ENCODE measurements at regions of chr13 and their contacts with region 1.

Region 1: GRCh38 chr13:45119991-45120864 is at the start of gene GTF2F2:
- DNase-seq: peak; percentile 94
- ATAC-seq: peak; percentile 81
- H3K4me3 ChIP-seq: peak within 1 kb of the TSS; percentile 68 to 100 (median 92)
- H3K4me3 Mint-ChIP-seq: no peak within 1 kb of the TSS
- H3K27ac ChIP-seq: peak within 1 kb of the TSS; percentile 66 to 93
- H3K27ac Mint-ChIP-seq: no peak within 1 kb of the TSS
- H3K4me1 ChIP-seq: peaks cover 20 to 21% of the 10 kb centered on the region in 2 donors
- H3K4me1 Mint-ChIP-seq: peaks cover 7% of the 10 kb centered on the region
- H3K27me3 ChIP-seq: no peaks in the 10 kb centered on the region
- H3K27me3 Mint-ChIP-seq: no peaks in the 10 kb centered on the region
- CTCF ChIP-seq: no peak
- total RNA-seq, gene GTF2F2: 19.6 and 23.6 TPM in 2 replicates

Region 2: GRCh38 chr13:43516401-43516833 is 1603.8 kb before region 1 on chr13:
- CTCF ChIA-PET with region 1: no interaction called
- POLR2A ChIA-PET with region 1: no interaction called
- intact Hi-C with region 1: no loop called
- DNase-seq: no peak
- ATAC-seq: no peak
- H3K4me3 ChIP-seq: no peak overlapping the region
- H3K4me3 Mint-ChIP-seq: no peak overlapping the region
- H3K27ac ChIP-seq: no peak overlapping the region
- H3K27ac Mint-ChIP-seq: no peak overlapping the region
- H3K4me1 ChIP-seq: no peaks in the 10 kb centered on the region
- H3K4me1 Mint-ChIP-seq: no peaks in the 10 kb centered on the region
- H3K27me3 ChIP-seq: no peaks in the 10 kb centered on the region
- H3K27me3 Mint-ChIP-seq: peaks cover 4% of the 10 kb centered on the region
- CTCF ChIP-seq: no peak

Region 3: GRCh38 chr13:44810061-44810840 is 310.0 kb before region 1 on chr13:
- CTCF ChIA-PET with region 1: no interaction called
- POLR2A ChIA-PET with region 1: no interaction called
- intact Hi-C with region 1: no loop called
- DNase-seq: no peak
- ATAC-seq: no peak
- H3K4me3 ChIP-seq: no peak overlapping the region
- H3K4me3 Mint-ChIP-seq: no peak overlapping the region
- H3K27ac ChIP-seq: no peak overlapping the region
- H3K27ac Mint-ChIP-seq: no peak overlapping the region
- H3K4me1 ChIP-seq: no peaks in the 10 kb centered on the region
- H3K4me1 Mint-ChIP-seq: no peaks in the 10 kb centered on the region
- H3K27me3 ChIP-seq: no peaks in the 10 kb centered on the region
- H3K27me3 Mint-ChIP-seq: peaks cover 1% of the 10 kb centered on the region
- CTCF ChIP-seq: no peak

Region 4: DNA sequence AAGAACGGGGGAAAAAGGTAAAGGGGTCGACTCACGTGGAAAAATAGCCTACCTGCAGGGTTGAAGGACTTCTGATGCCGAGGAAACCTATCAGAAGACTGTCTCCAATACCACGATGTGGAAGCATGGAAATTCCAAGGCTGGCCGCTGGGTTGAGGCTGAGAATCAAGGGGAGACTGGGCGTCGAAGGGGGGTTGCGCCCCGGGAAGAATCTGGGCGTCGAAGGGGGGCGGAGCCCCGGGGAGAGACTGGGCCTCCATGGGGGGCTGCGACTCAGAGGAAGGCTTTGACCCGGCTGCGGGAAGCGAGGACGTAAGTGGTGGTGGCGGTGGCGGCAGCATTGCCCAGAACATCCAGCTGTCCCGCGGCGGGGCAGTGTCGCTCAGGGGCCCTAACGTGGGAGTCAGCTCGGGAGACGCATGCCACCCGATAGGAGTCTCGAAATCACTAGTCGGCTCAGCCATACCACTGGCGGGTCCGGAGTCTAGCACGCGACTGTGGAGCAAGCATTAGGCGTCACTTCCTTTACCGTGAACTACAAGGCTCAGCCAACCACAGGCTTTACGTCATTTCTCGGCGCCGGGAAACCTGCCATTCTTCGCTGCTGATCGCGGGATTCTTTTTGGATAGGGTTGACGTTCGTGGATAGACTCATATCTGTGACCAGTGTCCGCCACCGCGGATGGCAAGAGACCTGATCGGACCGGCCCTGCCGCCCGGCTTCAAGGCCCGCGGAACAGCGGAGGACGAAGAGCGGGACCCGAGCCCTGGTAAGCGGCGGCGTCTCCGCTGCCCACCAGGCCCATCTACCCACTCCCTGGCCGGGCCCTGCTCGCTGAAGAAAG is 131.0 kb before region 1 on chr13 and contains the starts of genes GPALPP1 and NUFIP1:
- CTCF ChIA-PET with region 1: no interaction called
- POLR2A ChIA-PET with region 1: no interaction called
- intact Hi-C with region 1: loop called (anchors 1 kb)
- DNase-seq: peak; percentile 93
- ATAC-seq: peak; percentile 97
- H3K4me3 ChIP-seq: peak within 1 kb of the TSS; percentile 92 to 99 (median 98)
- H3K4me3 Mint-ChIP-seq: peak within 1 kb of the TSS; percentile 100
- H3K27ac ChIP-seq: peak within 1 kb of the TSS; percentile 79 to 89
- H3K27ac Mint-ChIP-seq: peak within 1 kb of the TSS; percentile 98
- H3K4me1 ChIP-seq: peaks cover 13 to 24% of the 10 kb centered on the region in 2 donors
- H3K4me1 Mint-ChIP-seq: peaks cover 43% of the 10 kb centered on the region
- H3K27me3 ChIP-seq: no peaks in the 10 kb centered on the region
- H3K27me3 Mint-ChIP-seq: no peaks in the 10 kb centered on the region
- CTCF ChIP-seq: no peak
- total RNA-seq, gene GPALPP1: 41.8 and 45.6 TPM in 2 replicates
- total RNA-seq, gene NUFIP1: 4.7 and 5.8 TPM in 2 replicates

Region 5: DNA sequence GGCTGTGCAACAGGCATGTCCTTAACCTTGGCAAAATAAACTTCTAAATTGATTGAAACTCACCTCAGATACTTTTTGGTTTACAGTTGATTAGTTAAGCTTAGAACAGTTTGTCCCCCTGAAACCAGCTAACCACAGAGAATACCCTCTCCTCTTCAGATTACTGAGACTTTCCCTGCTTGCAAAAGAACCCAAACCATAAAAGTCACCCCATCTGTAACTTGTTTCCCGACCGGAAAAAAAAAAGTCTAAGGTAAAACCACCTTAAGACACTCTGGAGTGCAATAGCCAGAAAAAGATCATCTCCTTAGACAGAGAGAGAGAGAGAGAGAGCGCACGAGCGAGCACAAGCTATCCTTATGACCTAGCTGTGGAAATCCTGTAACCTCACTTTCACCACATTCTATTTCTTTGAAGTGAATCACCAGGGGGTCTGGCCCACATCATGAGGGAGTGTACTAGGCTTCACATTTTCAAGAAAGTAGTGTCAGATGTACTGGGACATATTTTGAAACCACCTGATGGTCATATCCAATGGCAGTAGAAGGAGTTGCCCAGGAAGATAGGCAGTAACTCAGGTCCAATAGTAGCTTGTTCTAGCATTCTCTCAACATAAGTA is 11.0 kb before region 1 on chr13:
- CTCF ChIA-PET with region 1: no interaction called
- POLR2A ChIA-PET with region 1: no interaction called
- intact Hi-C with region 1: no loop called
- DNase-seq: no peak
- ATAC-seq: no peak
- H3K4me3 ChIP-seq: peak overlapping the region in 2 of 5 experiments; percentile 10 to 16
- H3K4me3 Mint-ChIP-seq: peak overlapping the region; percentile 49
- H3K27ac ChIP-seq: no peak overlapping the region
- H3K27ac Mint-ChIP-seq: no peak overlapping the region
- H3K4me1 ChIP-seq: no peaks in the 10 kb centered on the region
- H3K4me1 Mint-ChIP-seq: peaks cover 4% of the 10 kb centered on the region
- H3K27me3 ChIP-seq: peaks cover 0 to 2% (median 0%) of the 10 kb centered on the region in 4 experiments
- H3K27me3 Mint-ChIP-seq: peaks cover 25% of the 10 kb centered on the region
- CTCF ChIP-seq: no peak

Region 6: GRCh38 chr13:45301243-45301642 is 181.0 kb after region 1 on chr13:
- CTCF ChIA-PET with region 1: no interaction called
- POLR2A ChIA-PET with region 1: no interaction called
- intact Hi-C with region 1: loop called (anchors 10 kb)
- DNase-seq: no peak
- ATAC-seq: no peak
- H3K4me3 ChIP-seq: no peak overlapping the region
- H3K4me3 Mint-ChIP-seq: no peak overlapping the region
- H3K27ac ChIP-seq: no peak overlapping the region
- H3K27ac Mint-ChIP-seq: no peak overlapping the region
- H3K4me1 ChIP-seq: peaks cover 0 to 7% of the 10 kb centered on the region in 2 donors
- H3K4me1 Mint-ChIP-seq: peaks cover 7% of the 10 kb centered on the region
- H3K27me3 ChIP-seq: no peaks in the 10 kb centered on the region
- H3K27me3 Mint-ChIP-seq: peaks cover 10% of the 10 kb centered on the region
- CTCF ChIP-seq: no peak

Region 7: DNA sequence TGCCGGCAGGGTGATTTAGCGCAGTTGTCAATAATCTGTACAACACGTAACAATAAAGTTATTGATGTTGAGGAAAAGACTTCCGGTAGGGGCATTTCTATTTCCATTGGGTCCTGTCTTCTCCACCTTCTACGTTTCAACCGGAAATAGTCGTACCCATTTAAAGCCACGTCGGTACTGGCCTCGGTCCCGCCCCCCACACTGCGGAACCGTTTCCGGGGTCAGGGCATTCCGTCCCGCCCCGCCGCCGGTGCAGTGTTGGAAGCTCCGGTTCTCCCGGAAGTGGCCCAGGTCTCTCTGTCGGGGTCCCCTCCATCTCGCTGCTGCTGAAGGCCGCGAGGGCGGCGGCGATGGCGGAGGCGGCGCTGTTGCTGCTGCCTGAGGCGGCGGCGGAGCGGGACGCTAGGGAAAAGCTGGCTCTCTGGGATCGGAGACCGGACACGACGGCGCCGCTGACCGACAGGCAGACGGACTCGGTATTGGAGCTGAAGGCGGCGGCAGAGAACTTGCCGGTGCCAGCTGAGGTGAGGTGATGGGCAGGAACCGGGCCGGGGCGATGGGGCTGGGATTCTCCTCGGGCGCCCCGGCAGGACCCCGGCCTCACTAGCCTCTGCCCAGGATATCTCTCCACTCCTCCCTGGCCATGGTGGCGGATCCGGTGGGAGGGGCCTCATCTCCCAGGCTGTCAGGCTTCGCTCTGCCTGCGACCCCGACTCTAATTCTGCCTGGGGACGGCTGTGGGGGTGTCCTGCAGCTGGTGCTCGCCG is 344.6 kb after region 1 on chr13 and contains the start of gene COG3:
- CTCF ChIA-PET with region 1: no interaction called
- POLR2A ChIA-PET with region 1: no interaction called
- intact Hi-C with region 1: loop called (anchors 1 kb)
- DNase-seq: peak; percentile 96
- ATAC-seq: peak; percentile 96
- H3K4me3 ChIP-seq: peak within 1 kb of the TSS; percentile 74 to 96 (median 88)
- H3K4me3 Mint-ChIP-seq: peak within 1 kb of the TSS; percentile 91
- H3K27ac ChIP-seq: peak within 1 kb of the TSS; percentile 78 to 83
- H3K27ac Mint-ChIP-seq: peak within 1 kb of the TSS; percentile 91
- H3K4me1 ChIP-seq: peaks cover 12 to 21% of the 10 kb centered on the region in 2 donors
- H3K4me1 Mint-ChIP-seq: peaks cover 38% of the 10 kb centered on the region
- H3K27me3 ChIP-seq: no peaks in the 10 kb centered on the region
- H3K27me3 Mint-ChIP-seq: no peaks in the 10 kb centered on the region
- CTCF ChIP-seq: peak; percentile 56
- total RNA-seq, gene COG3: 37.3 and 41.5 TPM in 2 replicates

Measured in B cell (primary cell).